ENCODE measurements at regions of chr20 and their contacts with region 1.

Region 1: DNA sequence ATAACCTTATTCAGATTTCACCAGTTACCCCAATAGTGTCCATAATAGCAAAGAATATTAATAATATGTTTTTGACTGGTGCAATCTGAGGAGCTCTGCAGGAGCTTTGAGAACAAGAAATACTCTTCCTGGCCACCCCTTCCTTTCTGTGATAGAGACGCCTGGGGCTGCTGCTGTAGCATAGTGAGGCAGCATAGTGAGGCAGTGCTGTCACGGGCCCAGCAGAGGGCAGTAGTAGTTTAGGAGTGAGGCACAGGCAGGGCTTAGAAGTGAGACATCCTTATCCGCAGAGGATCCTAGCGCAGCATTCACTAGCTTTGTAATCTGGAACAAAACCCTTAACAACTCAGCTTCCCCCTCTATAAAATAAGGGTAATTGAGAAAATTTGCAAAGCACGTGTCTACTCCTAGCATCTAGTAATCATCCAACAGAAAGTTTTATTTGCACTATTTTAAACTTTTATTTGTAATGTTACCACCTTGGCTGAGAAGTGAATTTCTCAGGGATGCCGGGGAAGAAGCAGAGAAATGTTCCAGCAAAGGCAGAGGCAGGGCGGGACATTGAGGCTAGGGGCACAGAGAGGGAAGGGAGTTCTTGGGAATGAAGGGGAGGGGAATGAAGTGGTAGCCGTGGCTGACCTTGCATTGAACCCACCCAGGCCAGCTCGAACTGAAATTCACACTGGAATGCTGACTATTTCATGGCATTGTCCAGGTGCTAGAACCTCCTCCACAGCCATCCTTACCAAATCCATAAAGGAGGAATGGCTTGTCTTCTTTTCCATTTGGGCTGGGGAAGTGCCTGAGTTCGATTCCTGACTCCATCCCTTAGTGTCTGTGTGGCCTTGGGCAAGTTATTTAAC is 78.8 kb downstream of the CDS2 start:
- DNase-seq: peak; percentile 80
- H3K4me3 Mint-ChIP-seq: no peak overlapping the region
- H3K27ac Mint-ChIP-seq: no peak overlapping the region
- H3K4me1 Mint-ChIP-seq: peaks cover 4% of the 10 kb centered on the region
- H3K27me3 Mint-ChIP-seq: no peaks in the 10 kb centered on the region

Region 2: DNA sequence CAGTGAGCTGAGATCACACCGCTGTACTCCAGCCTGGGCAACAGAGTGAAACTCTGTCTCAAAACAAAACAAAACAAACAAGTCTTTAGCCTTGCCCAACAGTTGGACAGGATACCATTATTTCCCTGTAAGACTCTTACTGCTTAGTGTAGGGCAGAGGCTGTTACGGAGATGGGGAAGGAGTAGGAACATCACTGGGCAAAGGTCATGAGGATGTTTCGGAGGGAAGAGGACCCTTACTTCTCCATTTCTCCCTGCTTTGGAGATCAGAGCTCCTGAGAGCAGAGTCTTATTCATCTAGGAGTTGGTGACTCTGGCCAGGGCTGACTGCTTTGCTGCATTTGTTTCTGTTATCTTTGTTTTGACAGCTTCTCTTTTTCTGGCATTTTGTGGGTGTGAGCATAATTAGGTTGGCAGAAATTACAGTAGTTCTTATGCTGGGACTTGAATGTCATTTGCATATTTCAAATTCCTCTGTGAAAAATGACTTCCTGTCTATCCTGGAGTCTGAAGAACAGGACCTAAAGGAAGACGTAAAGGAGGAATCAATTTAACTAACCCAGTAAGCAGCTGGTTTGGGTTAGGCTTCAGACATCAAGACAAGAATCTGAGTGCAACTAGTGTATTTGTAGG is 10.2 kb after region 1 on chr20:
- CTCF ChIA-PET with region 1: interaction called, 15 read pairs
- DNase-seq: no peak
- H3K4me3 Mint-ChIP-seq: no peak overlapping the region
- H3K27ac Mint-ChIP-seq: no peak overlapping the region
- H3K4me1 Mint-ChIP-seq: no peaks in the 10 kb centered on the region
- H3K27me3 Mint-ChIP-seq: no peaks in the 10 kb centered on the region

Region 3: GRCh38 chr20:5222919-5223634 is 17.5 kb after region 1 on chr20:
- CTCF ChIA-PET with region 1: interaction called, 30 read pairs
- DNase-seq: peak; percentile 78
- H3K4me3 Mint-ChIP-seq: no peak overlapping the region
- H3K27ac Mint-ChIP-seq: no peak overlapping the region
- H3K4me1 Mint-ChIP-seq: no peaks in the 10 kb centered on the region
- H3K27me3 Mint-ChIP-seq: no peaks in the 10 kb centered on the region

Region 4: DNA sequence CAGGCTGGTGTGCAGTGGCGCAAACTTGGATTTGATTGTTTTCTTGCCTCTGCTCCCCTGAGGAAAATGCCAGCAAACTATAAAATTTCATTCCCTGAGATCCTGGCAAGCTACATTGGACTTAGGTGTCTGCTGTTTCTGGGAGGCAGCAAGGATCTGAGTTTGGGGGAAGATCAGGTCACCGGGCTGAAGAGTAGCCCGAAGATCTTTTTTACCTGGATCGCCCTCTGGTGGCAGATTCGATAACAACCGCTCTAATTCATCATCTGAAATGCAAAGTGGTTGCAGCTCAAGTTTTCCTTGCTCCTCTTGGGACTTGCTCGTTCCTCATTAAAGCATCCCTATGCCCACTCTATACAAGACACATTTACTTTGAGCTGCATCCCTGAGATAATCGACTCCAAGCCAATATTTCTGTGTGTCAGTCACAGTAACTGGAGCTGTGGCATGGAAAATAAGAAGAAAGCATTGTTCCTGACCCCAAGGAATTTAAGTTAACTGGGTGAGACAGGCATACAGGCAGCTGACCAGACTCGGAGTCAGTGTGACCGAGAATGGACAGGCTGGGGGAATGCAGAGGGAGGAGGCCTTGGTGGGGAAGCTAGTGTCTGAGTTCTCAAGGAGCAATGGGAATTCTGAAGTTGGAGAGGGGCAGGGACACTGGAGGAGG is 243.0 kb after region 1 on chr20:
- CTCF ChIA-PET with region 1: interaction called, 25 read pairs
- DNase-seq: peak; percentile 64
- H3K4me3 Mint-ChIP-seq: no peak overlapping the region
- H3K27ac Mint-ChIP-seq: no peak overlapping the region
- H3K4me1 Mint-ChIP-seq: no peaks in the 10 kb centered on the region
- H3K27me3 Mint-ChIP-seq: peaks cover 24% of the 10 kb centered on the region